ENCODE measurements at regions of chr20 and their contacts with region 1.

Region 1: DNA sequence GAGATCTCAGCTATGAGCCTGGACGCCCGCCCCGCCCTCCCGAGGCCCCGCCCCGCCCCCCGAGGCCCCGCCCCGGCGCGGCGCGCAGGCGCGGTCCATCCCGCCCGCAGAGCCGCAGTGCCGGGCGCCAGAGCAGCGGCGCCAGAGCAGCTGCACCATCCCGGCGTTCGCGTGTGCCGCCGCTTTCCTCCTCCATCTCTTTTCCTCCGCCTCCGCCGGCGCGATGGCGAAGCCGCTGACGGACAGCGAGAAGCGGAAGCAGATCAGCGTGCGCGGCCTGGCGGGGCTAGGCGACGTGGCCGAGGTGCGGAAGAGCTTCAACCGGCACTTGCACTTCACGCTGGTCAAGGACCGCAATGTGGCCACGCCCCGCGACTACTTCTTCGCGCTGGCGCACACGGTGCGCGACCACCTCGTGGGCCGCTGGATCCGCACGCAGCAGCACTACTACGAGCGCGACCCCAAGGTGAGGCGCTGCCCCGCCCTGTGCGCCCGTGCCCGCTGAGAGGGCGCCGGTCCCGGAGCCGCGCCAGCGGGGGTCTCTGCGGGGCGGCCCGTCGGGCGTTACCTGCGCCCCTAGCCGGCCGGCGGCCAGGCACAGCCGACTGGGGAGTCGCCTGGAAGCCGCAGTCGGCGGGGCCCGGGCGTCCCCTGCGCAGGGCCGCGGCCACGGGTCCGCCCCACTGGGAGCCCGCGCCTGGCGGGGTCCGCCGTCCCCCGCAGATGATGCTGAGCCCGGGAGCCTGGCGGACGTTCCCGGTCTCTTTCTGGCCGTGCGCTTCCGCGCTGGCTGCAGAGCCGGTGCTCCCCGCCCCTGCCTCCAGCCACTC is at the start of gene PYGB:
- DNase-seq: peak; percentile 89 to 94
- ATAC-seq: peak; percentile 68 to 80
- H3K4me3 ChIP-seq: peak within 1 kb of the TSS; percentile 82
- H3K27ac ChIP-seq: peak within 1 kb of the TSS; percentile 92 to 96
- H3K4me1 ChIP-seq: peaks cover 57% of the 10 kb centered on the region
- CTCF ChIP-seq: no peak
- EP300 ChIP-seq: no peak
- POLR2A ChIP-seq: peak; percentile 98
- RAD21 ChIP-seq: peak in 1 of 2 experiments; percentile 20; a peak in 3 of 5 replicates
- polyA plus RNA-seq, gene PYGB: 100 and 113 TPM in 2 replicates

Region 2: DNA sequence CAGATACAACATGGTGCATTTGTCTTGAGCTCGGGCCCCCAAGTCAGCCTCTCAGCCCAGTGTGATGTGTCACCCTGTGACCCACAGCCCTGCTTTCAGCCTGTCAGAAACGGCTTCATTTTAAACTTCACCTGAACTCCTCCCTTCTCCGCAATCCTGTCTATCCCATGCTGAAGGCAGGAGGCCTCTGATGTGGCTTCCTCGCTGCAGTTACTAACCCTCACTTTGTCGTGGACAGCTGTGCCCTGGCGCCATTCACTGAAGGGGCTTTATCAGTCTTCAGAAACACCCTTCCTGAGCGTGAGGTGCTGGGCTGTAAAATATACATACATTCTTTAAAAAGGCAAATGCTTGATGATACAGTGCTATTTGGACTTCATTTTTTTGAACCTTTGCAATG is 60.5 kb before region 1 on chr20:
- CTCF ChIA-PET with region 1: interaction called, 12 read pairs
- POLR2A ChIA-PET with region 1: no interaction called
- DNase-seq: no peak
- ATAC-seq: no peak
- H3K4me3 ChIP-seq: no peak overlapping the region
- H3K27ac ChIP-seq: no peak overlapping the region
- H3K4me1 ChIP-seq: no peaks in the 10 kb centered on the region
- CTCF ChIP-seq: no peak
- EP300 ChIP-seq: no peak
- POLR2A ChIP-seq: no peak
- RAD21 ChIP-seq: no peak

Region 3: DNA sequence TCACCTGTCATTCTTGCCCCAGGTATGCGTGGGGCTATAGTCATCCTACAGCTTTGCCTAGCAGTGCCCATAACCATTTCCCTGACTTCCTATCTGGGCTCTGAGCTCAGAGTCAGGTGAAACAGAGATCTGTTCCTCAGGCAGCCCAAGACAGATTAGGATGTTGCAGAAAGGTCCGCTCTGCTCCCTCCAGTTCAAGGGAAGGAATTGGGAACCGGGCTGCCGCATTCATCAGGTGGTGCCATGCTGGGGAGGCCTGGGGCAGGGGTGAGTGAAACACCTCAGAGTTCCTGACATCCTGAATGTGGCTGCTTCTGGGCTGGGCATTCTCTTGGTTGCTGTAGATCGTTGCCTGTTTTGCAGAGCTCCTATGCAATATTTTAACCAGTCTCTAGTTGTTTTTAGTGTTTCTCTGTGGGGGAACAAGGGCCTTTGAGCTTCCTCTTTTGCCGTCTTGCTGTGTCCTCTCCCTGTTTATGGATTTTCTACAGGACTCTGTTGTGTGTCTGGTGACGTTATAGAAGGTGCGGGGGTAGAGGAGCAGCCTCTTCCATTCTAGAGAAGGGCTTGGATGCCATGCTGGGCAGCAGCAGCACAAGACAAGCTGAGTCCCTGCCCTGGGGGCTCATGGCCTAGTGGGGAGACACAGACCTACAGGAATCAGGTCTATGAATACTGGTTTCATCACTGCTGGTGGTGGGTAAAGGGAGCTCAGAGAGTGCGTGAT is 43.5 kb before region 1 on chr20:
- CTCF ChIA-PET with region 1: interaction called, 30 read pairs
- POLR2A ChIA-PET with region 1: interaction called, 3 read pairs
- DNase-seq: no peak
- ATAC-seq: peak in 1 of 2 experiments; percentile 31; a peak in 2 of 6 replicates
- H3K4me3 ChIP-seq: no peak overlapping the region
- H3K27ac ChIP-seq: peak overlapping the region in 1 of 2 experiments; percentile 9; a peak in 1 of 6 replicates
- H3K4me1 ChIP-seq: peaks cover 32% of the 10 kb centered on the region
- CTCF ChIP-seq: no peak
- EP300 ChIP-seq: no peak
- POLR2A ChIP-seq: no peak
- RAD21 ChIP-seq: no peak

Region 4: DNA sequence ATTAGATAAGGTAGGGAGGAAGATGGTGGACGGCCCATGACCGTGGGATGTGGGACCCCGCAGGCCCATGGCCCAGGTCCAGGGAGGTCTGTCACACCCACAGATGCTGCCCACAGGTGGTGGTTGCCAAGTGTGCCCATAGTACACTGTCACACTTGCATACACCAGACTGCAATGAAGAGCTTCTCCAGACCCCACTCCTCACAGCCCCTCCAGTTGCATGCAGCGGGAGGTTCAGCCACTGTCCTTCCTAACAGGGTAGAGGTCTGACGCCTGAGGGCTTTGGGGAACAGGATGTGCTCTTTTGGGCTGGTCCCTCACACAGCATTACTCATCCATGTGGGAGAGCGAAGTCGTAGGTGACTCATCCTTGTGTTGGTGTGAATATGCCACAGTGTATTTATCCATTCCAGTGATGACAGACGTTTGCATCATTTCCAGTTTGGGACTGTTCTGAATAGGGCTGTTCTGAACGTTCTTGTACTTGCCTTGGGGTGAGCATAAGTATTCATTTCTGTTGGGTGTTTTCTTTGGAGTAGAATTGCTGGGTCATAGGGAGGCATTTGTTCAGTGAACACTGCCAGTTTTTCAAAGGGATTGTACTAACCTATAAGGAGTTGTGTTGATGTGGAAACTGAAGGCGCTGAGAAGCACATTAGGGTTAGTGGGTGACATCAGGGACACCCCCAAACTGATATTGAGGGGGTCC is 10.4 kb before region 1 on chr20:
- CTCF ChIA-PET with region 1: interaction called, 300 read pairs
- POLR2A ChIA-PET with region 1: interaction called, 60 read pairs
- DNase-seq: peak; percentile 99 to 100
- ATAC-seq: peak; percentile 85 to 90
- H3K4me3 ChIP-seq: no peak overlapping the region
- H3K27ac ChIP-seq: peak overlapping the region; percentile 95 to 97
- H3K4me1 ChIP-seq: peaks cover 78% of the 10 kb centered on the region
- CTCF ChIP-seq: no peak
- EP300 ChIP-seq: peak; percentile 97
- POLR2A ChIP-seq: no peak
- RAD21 ChIP-seq: peak in 1 of 2 experiments; percentile 42; a peak in 3 of 5 replicates

Region 5: DNA sequence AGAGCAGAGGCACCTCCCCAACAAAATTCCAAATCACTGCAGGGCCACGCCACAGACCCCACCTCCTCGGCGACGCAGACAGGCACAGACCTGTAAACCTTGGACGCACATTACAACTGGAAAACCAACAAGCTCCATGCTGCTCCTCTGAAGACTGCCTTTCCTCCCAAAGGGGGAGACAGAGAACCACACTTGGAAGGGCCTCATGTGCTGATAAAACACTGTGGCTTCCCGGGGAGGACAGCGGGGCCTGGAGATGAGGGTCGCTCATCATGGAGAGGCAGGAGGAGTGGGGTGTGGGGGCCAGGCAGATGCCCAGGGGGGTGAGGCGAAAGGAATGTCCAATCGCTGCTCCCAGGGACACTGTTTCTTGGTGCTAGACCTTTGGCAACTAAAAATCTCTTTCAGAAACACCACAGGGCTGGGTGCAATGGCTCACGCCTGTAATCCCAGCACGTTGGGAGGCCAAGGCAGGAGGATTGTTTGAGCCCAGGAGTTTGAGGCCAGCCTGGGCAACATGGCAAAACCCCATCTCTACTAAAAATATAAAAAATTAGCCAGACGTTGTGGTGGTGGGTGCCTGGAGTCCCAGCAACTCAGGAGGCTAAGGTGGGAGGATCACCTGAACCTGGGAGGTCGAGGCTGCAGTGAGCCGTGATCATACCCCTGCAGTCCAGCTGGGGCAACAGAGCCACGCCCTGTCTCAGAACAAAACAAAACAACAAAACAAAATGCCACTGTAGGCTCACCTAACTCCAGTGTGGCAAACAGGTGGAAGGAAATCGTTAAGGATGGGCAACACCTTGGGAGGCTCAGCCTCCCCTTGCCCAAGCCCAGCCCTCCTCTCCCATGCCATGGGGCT is 88.6 kb after region 1 on chr20:
- CTCF ChIA-PET with region 1: no interaction called
- POLR2A ChIA-PET with region 1: no interaction called
- DNase-seq: peak; percentile 33 to 71
- ATAC-seq: peak; percentile 94
- H3K4me3 ChIP-seq: no peak overlapping the region
- H3K27ac ChIP-seq: peak overlapping the region in 1 of 2 experiments; percentile 50; a peak in 2 of 6 replicates
- H3K4me1 ChIP-seq: peaks cover 24% of the 10 kb centered on the region; the same call in 2 of the 3 replicates
- CTCF ChIP-seq: peak; percentile 30
- EP300 ChIP-seq: no peak
- POLR2A ChIP-seq: no peak
- RAD21 ChIP-seq: peak; percentile 54 to 73

Region 6: GRCh38 chr20:25372584-25373336 is 124.6 kb after region 1 on chr20:
- CTCF ChIA-PET with region 1: no interaction called
- POLR2A ChIA-PET with region 1: no interaction called
- DNase-seq: peak in 1 of 2 experiments; percentile 40
- ATAC-seq: peak; percentile 50 to 61; a peak in 4 of 6 replicates
- H3K4me3 ChIP-seq: no peak overlapping the region
- H3K27ac ChIP-seq: no peak overlapping the region
- H3K4me1 ChIP-seq: no peaks in the 10 kb centered on the region
- CTCF ChIP-seq: no peak
- EP300 ChIP-seq: peak in 1 of 2 experiments; percentile 19; a peak in 1 of 5 replicates
- POLR2A ChIP-seq: no peak
- RAD21 ChIP-seq: no peak

Region 7: DNA sequence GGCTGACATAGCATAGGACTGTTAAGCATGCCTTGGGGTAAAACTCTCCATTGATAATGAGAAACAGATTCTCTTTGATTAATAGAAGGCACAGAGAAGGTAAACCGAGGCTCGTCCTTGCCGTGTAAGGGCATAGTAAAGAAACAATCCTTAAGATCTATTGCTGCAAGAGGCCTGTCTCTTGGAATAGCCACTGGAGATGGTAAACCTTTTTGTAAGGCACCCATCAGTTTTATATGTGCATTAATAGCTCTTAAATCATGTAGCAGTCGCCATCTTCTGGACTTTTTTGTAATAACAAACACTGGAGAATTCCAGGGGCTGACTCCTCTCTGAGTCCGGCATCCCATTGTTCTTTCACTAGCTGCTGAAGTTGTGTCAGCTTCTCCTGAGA is 150.9 kb after region 1 on chr20:
- CTCF ChIA-PET with region 1: interaction called, 14 read pairs
- POLR2A ChIA-PET with region 1: interaction called, 3 read pairs
- DNase-seq: peak; percentile 77 to 81
- ATAC-seq: peak; percentile 99
- H3K4me3 ChIP-seq: no peak overlapping the region
- H3K27ac ChIP-seq: peak overlapping the region; percentile 46; a peak in 5 of 6 replicates
- H3K4me1 ChIP-seq: peaks cover 18% of the 10 kb centered on the region
- CTCF ChIP-seq: peak; percentile 90
- EP300 ChIP-seq: no peak
- POLR2A ChIP-seq: no peak
- RAD21 ChIP-seq: peak; percentile 94 to 95

Measured in A549 (cell line).